CD4-positive, alpha-beta T cell (primary cell): ENCODE measurements at regions of chr15 and their contacts with region 1.

Region 1: DNA sequence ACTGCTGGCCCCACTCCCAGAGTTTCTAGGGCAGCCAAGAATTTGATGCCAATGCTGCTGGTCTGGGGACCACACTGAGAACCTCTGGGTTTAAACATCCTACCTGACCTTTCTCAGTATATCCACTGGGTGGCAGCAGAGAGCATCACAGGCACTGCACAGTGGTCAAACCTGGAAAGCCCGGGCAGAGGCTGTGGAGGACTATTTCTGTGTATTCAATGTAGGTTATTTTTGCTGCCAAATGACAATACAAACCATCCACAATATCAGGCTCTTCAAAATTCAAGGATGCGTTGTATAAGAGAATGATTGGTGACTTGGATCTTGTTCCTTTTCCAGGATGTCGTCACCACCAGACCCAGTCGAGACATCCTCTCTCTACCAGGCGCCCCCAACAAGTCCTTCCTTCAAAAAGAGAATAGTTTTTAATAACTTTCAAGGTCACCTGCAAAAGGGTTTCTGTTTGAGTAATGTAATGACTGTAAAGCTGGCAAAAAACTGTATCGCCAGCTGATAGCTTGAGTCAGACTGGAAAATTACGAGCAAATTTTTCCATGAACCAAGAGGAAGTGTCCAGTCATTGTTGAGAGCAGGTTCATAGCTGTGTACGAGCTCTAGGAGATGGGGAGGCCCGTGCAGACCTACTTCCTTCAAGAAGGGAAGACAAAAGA is 30.5 kb upstream of the MYZAP start:
- DNase-seq: peak; percentile 33 to 80 (median 47)
- ATAC-seq: peak; percentile 70
- H3K4me3 ChIP-seq: no peak overlapping the region
- H3K4me3 Mint-ChIP-seq: no peak overlapping the region
- H3K27ac ChIP-seq: no peak overlapping the region
- H3K27ac Mint-ChIP-seq: no peak overlapping the region
- H3K4me1 ChIP-seq: peaks cover 19% of the 10 kb centered on the region
- H3K4me1 Mint-ChIP-seq: peaks cover 36% of the 10 kb centered on the region
- H3K27me3 ChIP-seq: no peaks in the 10 kb centered on the region
- H3K27me3 Mint-ChIP-seq: no peaks in the 10 kb centered on the region
- CTCF ChIP-seq: peak; percentile 90

Region 2: DNA sequence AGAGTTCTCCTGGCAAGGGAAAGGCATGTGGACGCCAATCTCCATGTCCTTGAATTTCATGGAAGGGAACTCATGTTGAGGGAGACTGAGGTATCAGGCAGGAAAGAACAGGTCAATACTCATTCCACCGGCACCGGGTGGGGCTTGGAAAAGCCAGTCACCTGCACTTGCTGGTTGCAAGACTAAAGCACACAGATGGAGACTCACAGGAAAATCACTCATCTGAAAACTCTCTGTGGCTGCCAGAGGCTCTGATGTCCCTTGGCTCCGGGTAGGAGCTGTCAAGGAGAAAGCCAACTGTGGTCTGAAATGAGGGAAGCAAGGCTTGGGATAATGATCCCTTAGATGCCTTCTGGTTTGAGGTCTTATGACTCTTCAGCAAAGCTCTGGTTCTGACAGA is 193.6 kb before region 1 on chr15:
- CTCF ChIA-PET with region 1: no interaction called
- POLR2A ChIA-PET with region 1: no interaction called
- intact Hi-C with region 1: no loop called
- DNase-seq: no peak
- ATAC-seq: no peak
- H3K4me3 ChIP-seq: no peak overlapping the region
- H3K4me3 Mint-ChIP-seq: no peak overlapping the region
- H3K27ac ChIP-seq: no peak overlapping the region
- H3K27ac Mint-ChIP-seq: no peak overlapping the region
- H3K4me1 ChIP-seq: no peaks in the 10 kb centered on the region
- H3K4me1 Mint-ChIP-seq: no peaks in the 10 kb centered on the region
- H3K27me3 ChIP-seq: peaks cover 0 to 2% of the 10 kb centered on the region in 2 experiments
- H3K27me3 Mint-ChIP-seq: peaks cover 4% of the 10 kb centered on the region
- CTCF ChIP-seq: no peak

Region 3: DNA sequence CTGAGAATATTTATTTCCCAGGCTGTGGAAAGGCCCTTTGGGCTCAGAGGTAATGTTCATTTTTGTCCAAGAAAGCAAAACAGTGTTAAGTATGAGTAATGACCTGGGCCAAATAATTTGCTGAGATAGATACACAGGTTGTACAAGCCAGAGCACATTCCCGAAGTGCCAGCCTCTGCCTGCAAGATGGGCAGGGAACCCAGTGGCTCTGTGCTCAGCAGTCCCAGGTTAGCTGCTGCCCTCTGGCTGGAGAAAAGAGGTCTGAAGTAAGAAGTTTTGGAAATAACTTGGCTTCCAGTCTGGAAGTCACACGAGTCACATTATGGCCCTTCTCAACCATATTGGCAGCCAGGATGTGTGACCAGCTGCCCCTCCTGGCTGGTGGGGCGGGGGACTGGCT is 50.8 kb after region 1 on chr15:
- CTCF ChIA-PET with region 1: interaction called, 3 read pairs
- POLR2A ChIA-PET with region 1: no interaction called
- intact Hi-C with region 1: loop called in 1 of 2 experiments (anchors 2 kb)
- DNase-seq: peak in 2 of 14 experiments; percentile 10
- ATAC-seq: no peak
- H3K4me3 ChIP-seq: no peak overlapping the region
- H3K4me3 Mint-ChIP-seq: no peak overlapping the region
- H3K27ac ChIP-seq: no peak overlapping the region
- H3K27ac Mint-ChIP-seq: no peak overlapping the region
- H3K4me1 ChIP-seq: no peaks in the 10 kb centered on the region
- H3K4me1 Mint-ChIP-seq: no peaks in the 10 kb centered on the region
- H3K27me3 ChIP-seq: no peaks in the 10 kb centered on the region
- H3K27me3 Mint-ChIP-seq: no peaks in the 10 kb centered on the region
- CTCF ChIP-seq: no peak

Region 4: GRCh38 chr15:57654153-57654852 is 93.1 kb after region 1 on chr15:
- CTCF ChIA-PET with region 1: no interaction called
- POLR2A ChIA-PET with region 1: no interaction called
- intact Hi-C with region 1: loop called (anchors 5 to 10 kb)
- DNase-seq: no peak
- ATAC-seq: no peak
- H3K4me3 ChIP-seq: no peak overlapping the region
- H3K4me3 Mint-ChIP-seq: no peak overlapping the region
- H3K27ac ChIP-seq: no peak overlapping the region
- H3K27ac Mint-ChIP-seq: no peak overlapping the region
- H3K4me1 ChIP-seq: no peaks in the 10 kb centered on the region
- H3K4me1 Mint-ChIP-seq: no peaks in the 10 kb centered on the region
- H3K27me3 ChIP-seq: no peaks in the 10 kb centered on the region
- H3K27me3 Mint-ChIP-seq: peaks cover 4% of the 10 kb centered on the region
- CTCF ChIP-seq: no peak

Region 5: DNA sequence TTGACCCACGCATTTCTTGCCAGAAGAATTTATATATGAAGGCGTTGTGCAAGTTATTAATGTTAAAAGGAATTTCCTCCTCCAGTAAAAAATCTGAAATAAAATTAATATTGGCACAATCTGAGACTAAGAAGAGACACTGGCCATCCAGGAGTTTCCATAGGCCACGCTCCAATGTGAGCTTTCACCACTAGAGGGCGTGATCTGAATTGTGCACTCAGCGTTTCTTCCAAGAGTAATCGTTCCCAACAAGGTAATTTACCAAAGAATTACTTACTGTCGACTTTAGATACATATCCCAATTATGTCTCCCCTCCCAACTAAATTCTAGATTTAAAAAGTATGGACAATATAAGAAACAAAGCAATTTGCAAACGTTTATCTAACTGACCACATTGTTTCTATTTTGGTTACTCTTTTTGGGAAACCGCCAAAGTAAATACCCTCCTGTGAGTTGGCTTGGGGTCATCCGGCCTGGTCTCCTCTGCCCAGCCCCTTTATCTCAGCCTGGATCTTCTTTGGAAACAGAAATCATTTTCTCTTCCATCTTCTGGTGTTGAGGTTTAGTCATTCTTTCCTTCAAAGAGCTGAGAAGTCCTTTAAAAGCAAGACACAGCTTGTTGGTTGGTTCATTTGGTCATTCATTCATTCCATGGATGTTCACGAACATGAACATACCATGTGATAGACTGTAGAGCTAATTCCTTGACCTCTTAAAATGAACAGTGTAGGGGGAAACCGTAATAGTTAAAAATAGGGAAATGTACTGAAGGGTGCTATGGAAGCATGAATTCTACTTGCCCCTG is 171.6 kb after region 1 on chr15:
- CTCF ChIA-PET with region 1: no interaction called
- POLR2A ChIA-PET with region 1: no interaction called
- intact Hi-C with region 1: loop called in 1 of 2 experiments (anchors 1 kb)
- DNase-seq: peak in 13 of 14 experiments; percentile 9 to 71 (median 33)
- ATAC-seq: no peak
- H3K4me3 ChIP-seq: no peak overlapping the region
- H3K4me3 Mint-ChIP-seq: no peak overlapping the region
- H3K27ac ChIP-seq: no peak overlapping the region
- H3K27ac Mint-ChIP-seq: no peak overlapping the region
- H3K4me1 ChIP-seq: no peaks in the 10 kb centered on the region
- H3K4me1 Mint-ChIP-seq: peaks cover 13% of the 10 kb centered on the region
- H3K27me3 ChIP-seq: no peaks in the 10 kb centered on the region
- H3K27me3 Mint-ChIP-seq: no peaks in the 10 kb centered on the region
- CTCF ChIP-seq: peak; percentile 94

Region 6: DNA sequence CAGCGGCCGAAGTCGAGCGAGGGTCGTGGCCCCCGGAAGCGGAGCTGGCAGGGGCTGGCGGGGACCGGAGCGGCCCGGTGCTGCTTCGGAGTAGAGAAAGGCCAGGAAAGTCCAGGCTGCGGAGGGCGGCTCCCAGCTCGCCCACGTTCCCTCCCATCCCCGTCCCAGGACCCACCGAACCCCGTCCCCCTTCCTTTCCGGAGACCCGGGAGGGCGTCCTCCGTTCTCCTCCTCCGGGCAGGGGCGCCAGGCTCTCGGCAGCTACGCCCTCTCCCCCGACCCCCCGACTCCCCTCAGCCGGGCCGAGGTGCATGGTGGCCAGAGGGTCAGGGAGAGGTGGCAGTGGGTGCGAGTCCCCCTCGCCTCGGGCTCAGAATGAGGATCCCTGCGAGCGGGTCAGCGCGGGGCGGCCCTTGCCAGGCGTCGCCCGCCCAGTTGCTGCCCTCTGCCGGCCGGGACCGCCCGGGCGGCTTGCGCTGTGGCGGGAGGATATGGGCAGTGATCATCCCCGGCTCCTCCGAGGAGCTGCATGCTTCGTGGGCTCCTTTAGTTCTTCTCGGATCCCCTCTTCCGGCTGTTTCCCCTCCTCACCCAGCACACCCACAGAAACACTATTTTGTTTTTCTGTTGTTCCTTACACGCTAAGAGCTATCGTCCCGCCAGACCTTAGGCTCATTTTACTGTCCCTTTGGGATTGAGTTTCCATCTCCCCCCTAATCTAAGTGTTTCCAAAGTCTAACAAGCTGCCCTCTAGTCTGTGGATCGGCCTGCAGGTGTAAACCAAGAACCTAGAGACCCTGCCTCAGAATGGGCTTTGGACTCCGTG is 505.1 kb after region 1 on chr15:
- CTCF ChIA-PET with region 1: no interaction called
- POLR2A ChIA-PET with region 1: no interaction called
- intact Hi-C with region 1: loop called in 1 of 2 experiments (anchors 5 kb)
- DNase-seq: peak in 11 of 14 experiments; percentile 3 to 62 (median 26)
- ATAC-seq: peak; percentile 44
- H3K4me3 ChIP-seq: peak overlapping the region; percentile 51
- H3K4me3 Mint-ChIP-seq: peak overlapping the region; percentile 83
- H3K27ac ChIP-seq: no peak overlapping the region
- H3K27ac Mint-ChIP-seq: no peak overlapping the region
- H3K4me1 ChIP-seq: peaks cover 17% of the 10 kb centered on the region
- H3K4me1 Mint-ChIP-seq: peaks cover 20% of the 10 kb centered on the region
- H3K27me3 ChIP-seq: peaks cover 39 to 57% of the 10 kb centered on the region in 2 experiments
- H3K27me3 Mint-ChIP-seq: peaks cover 67% of the 10 kb centered on the region
- CTCF ChIP-seq: peak; percentile 58